Activated B cell treated with CpG ODN at 0.5 μM for 24 hours (primary cell): ENCODE measurements at regions of chr2 and their contacts with region 1.

Region 1: GRCh38 chr2:134161170-134161547 is 92.7 kb upstream of the MGAT5 start:
- DNase-seq: no peak
- ATAC-seq: no peak
- H3K4me3 Mint-ChIP-seq: no peak overlapping the region
- H3K27ac Mint-ChIP-seq: peak overlapping the region; percentile 27
- H3K4me1 Mint-ChIP-seq: peaks cover 93% of the 10 kb centered on the region
- H3K27me3 Mint-ChIP-seq: no peaks in the 10 kb centered on the region
- CTCF ChIP-seq: no peak

Region 2: DNA sequence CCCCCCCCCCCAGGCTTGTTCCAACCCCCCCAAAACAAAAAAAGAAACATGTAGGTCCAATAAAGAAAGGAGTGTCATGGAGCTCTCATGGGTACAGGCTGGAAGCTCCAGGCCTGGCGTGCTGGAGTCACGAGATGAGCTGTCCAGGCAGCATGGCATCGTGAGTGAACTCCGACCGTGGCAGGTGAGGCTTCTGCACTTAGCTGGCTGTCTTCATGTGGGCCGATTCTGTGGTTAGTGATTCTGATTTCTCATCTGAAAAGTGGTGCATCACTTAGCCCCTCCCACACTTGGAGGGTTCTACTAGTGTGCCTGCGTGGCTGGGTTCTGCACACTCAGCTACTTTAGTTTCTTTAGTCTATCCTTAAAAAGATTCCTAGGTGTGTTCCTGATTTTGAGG is 33.7 kb before region 1 on chr2:
- CTCF ChIA-PET with region 1: no interaction called
- POLR2A ChIA-PET with region 1: no interaction called
- intact Hi-C with region 1: loop called (anchors 5 kb)
- DNase-seq: no peak
- ATAC-seq: peak; percentile 59
- H3K4me3 Mint-ChIP-seq: peak overlapping the region; percentile 56
- H3K27ac Mint-ChIP-seq: peak overlapping the region; percentile 65
- H3K4me1 Mint-ChIP-seq: peaks cover 88% of the 10 kb centered on the region
- H3K27me3 Mint-ChIP-seq: no peaks in the 10 kb centered on the region
- CTCF ChIP-seq: no peak

Region 3: DNA sequence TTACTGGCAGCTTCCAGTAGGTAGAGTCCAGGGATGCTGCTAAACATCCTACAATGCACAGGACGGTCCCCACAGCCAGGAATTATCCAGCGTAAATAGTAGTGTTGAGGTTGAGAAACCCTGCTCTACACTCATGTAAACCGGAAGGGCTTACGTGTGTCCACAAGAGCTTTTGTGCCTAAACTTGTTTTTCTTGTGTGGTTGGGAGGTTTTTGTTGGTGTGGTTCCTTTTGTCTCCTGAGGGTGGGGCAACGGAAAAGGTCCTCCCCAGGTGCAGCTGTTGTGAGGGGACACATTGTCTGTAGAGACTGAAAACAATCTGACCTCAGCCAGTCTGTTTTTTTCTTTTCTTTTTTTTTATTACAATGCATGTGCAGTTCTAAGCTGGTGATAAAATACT is 20.1 kb after region 1 on chr2:
- CTCF ChIA-PET with region 1: no interaction called
- POLR2A ChIA-PET with region 1: interaction called, 4 read pairs
- intact Hi-C with region 1: loop called (anchors 2 kb)
- DNase-seq: no peak
- ATAC-seq: peak; percentile 43
- H3K4me3 Mint-ChIP-seq: peak overlapping the region; percentile 35
- H3K27ac Mint-ChIP-seq: peak overlapping the region; percentile 84
- H3K4me1 Mint-ChIP-seq: peaks cover 93% of the 10 kb centered on the region
- H3K27me3 Mint-ChIP-seq: no peaks in the 10 kb centered on the region
- CTCF ChIP-seq: no peak

Region 4: GRCh38 chr2:134301099-134301927 is 140.2 kb after region 1 on chr2:
- CTCF ChIA-PET with region 1: no interaction called
- POLR2A ChIA-PET with region 1: no interaction called
- intact Hi-C with region 1: no loop called
- DNase-seq: no peak
- ATAC-seq: no peak
- H3K4me3 Mint-ChIP-seq: no peak overlapping the region
- H3K27ac Mint-ChIP-seq: peak overlapping the region; percentile 46
- H3K4me1 Mint-ChIP-seq: peaks cover 75% of the 10 kb centered on the region
- H3K27me3 Mint-ChIP-seq: no peaks in the 10 kb centered on the region
- CTCF ChIP-seq: no peak

Region 5: DNA sequence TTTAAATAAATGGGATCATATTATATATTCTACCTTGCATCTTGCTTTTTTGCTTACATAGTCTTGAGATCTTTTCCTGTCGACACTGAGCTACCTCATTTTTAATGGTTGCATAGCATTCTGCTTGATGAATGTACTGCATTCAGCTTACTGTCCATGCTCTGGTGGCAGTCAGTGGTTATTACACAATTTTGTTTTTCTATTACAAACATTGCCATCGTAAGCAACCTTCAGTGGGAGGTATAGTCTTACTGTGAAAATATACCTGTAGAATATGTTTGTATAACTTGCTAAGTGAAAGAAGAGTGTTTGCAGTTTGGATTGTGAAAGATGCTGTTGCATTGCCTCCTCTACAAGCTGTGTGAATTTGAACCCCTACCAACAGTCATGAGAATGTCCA is 1623.9 kb after region 1 on chr2:
- CTCF ChIA-PET with region 1: no interaction called
- POLR2A ChIA-PET with region 1: no interaction called
- intact Hi-C with region 1: no loop called
- DNase-seq: no peak
- ATAC-seq: no peak
- H3K4me3 Mint-ChIP-seq: no peak overlapping the region
- H3K27ac Mint-ChIP-seq: no peak overlapping the region
- H3K4me1 Mint-ChIP-seq: peaks cover 10% of the 10 kb centered on the region
- H3K27me3 Mint-ChIP-seq: no peaks in the 10 kb centered on the region
- CTCF ChIP-seq: no peak